Pancreas (tissue), 10 donors: ENCODE measurements at regions of chr14 and their contacts with region 1.

Region 1: DNA sequence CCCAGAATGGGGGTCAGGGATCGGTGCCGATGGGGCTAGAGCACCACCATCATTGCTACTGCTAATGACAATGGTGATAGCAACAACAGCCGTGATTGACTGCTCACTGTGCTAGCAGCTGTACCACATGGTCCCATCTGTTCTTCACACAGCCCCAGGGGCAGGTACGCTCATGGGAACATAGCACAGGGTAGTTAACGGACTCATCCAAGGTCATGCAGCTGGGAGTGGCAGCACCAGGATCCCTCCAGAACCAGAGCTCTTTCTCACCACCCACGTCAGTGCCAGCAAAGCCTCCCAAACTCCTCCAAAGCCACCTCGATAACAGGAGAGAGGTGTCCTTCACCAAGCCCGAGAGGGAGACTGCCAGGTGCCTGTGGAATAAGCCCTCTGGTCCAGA is 11.2 kb upstream of the DYNC1H1 start:
- DNase-seq: peak in 1 of 6 donors; percentile 16
- ATAC-seq: no peak
- H3K4me3 ChIP-seq: no peak overlapping the region
- H3K27ac ChIP-seq: no peak overlapping the region
- H3K4me1 ChIP-seq: peaks cover 0 to 14% (median 11%) of the 10 kb centered on the region in 3 donors
- H3K27me3 ChIP-seq: no peaks in the 10 kb centered on the region
- CTCF ChIP-seq: no peak

Region 2: GRCh38 chr14:101707068-101707842 is 245.9 kb before region 1 on chr14:
- intact Hi-C with region 1: loop called in 1 of 3 experiments (anchors 5 kb)
- DNase-seq: peak in 4 of 6 donors; percentile 37 to 72 (median 44)
- ATAC-seq: peak; percentile 78 to 92 (median 90)
- H3K4me3 ChIP-seq: no peak overlapping the region
- H3K27ac ChIP-seq: no peak overlapping the region
- H3K4me1 ChIP-seq: peaks cover 0 to 3% (median 0%) of the 10 kb centered on the region in 3 donors
- H3K27me3 ChIP-seq: no peaks in the 10 kb centered on the region
- CTCF ChIP-seq: peak; percentile 57 to 82 (median 72)

Region 3: GRCh38 chr14:101774006-101774795 is 178.9 kb before region 1 on chr14:
- intact Hi-C with region 1: loop called in 1 of 3 experiments (anchors 10 kb)
- DNase-seq: no peak
- ATAC-seq: no peak
- H3K4me3 ChIP-seq: no peak overlapping the region
- H3K27ac ChIP-seq: no peak overlapping the region
- H3K4me1 ChIP-seq: no peaks in the 10 kb centered on the region
- H3K27me3 ChIP-seq: no peaks in the 10 kb centered on the region
- CTCF ChIP-seq: no peak

Region 4: DNA sequence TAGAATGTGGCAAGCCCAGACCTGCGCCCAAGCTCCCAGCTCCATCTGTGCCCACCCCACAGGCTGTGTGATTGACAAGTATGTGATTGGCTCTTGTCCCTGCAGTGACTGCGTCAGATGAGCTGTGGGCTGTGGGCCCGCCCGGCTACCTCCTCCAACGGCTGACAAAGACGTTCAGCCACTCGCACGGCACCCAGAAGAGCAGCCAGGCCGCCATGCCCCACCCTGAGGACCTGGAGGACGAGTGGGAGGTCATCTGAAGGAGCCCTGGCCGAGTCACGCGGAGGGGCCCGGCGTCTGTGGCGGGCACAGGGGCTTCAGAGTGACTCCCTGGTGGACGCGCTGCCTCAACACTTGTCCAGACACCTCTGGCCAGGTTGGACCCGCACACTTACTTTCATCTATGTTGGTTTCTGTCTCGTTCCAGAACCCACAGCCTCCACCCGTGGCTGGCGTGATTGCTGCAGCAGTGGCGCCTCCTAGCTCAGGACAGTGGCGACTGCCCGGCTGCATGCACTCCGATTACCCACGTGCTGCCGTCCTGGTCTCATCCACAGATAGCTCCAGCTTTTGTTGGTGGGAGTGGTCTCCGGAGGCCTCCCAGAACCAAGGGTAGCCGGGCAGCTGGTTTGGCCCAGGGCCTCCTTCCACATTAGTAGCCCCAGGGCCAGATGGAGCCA is 545.0 kb after region 1 on chr14:
- intact Hi-C with region 1: no loop called
- DNase-seq: no peak
- ATAC-seq: no peak
- H3K4me3 ChIP-seq: no peak overlapping the region
- H3K27ac ChIP-seq: no peak overlapping the region
- H3K4me1 ChIP-seq: no peaks in the 10 kb centered on the region
- H3K27me3 ChIP-seq: no peaks in the 10 kb centered on the region
- CTCF ChIP-seq: no peak